Activated T-helper 1 cell treated with anti-CD3 and anti-CD28 coated beads, Interleukin-12 subunit alpha, Interleukin-12 subunit beta, Interleukin-2, Interleukin-4 antibody, amounts not matched to agents 30 ng/mL and 10 ng/mL and 1 ng/mL, durations not matched to agents 14 hours and 24 hours and 36 hours (primary cell): ENCODE measurements at regions of chrX and their contacts with region 1.

Region 1: DNA sequence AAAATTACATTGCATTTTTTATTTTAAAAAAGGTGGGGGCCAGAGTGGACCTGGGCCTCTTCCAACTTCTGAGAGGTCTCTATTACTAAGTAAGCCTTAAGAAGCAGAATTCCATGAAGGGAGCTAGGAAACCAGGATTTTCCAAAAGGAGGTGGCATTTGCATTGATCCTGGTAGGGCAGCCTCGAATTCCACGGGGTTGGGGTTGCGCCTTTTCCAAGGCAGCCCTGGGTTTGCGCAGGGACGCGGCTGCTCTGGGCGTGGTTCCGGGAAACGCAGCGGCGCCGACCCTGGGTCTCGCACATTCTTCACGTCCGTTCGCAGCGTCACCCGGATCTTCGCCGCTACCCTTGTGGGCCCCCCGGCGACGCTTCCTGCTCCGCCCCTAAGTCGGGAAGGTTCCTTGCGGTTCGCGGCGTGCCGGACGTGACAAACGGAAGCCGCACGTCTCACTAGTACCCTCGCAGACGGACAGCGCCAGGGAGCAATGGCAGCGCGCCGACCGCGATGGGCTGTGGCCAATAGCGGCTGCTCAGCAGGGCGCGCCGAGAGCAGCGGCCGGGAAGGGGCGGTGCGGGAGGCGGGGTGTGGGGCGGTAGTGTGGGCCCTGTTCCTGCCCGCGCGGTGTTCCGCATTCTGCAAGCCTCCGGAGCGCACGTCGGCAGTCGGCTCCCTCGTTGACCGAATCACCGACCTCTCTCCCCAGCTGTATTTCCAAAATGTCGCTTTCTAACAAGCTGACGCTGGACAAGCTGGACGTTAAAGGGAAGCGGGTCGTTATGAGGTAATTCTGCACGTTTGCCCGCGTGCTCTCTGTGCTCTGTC is at the start of gene PGK1:
- DNase-seq: peak; percentile 92
- H3K4me3 Mint-ChIP-seq: peak within 1 kb of the TSS; percentile 97
- H3K27ac Mint-ChIP-seq: peak within 1 kb of the TSS; percentile 91
- H3K4me1 Mint-ChIP-seq: peaks cover 51% of the 10 kb centered on the region
- H3K27me3 Mint-ChIP-seq: no peaks in the 10 kb centered on the region
- total RNA-seq, gene PGK1: 799 and 814 TPM in 2 replicates

Region 2: DNA sequence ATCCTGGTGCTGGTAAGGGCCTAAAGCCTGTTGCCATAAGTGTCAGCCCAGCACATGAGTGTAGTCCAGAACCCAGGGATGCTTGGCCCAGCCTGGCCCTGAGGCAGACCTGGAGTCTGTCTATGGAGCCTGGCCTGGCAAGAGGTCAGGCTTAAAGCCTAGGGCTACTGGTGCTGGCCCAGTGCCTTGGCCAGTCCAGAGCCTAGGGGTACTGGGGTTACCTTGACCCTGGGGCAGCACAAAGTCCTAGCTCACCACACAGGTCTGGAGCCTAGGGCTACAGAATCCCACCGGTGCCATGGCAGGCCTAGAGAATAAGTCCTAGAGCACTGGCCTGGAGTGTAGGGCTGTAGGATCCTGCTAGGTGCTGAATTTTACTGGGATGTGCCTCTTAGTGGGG is 1282.6 kb before region 1 on chrX:
- intact Hi-C with region 1: no loop called
- DNase-seq: no peak
- H3K4me3 Mint-ChIP-seq: no peak overlapping the region
- H3K27ac Mint-ChIP-seq: no peak overlapping the region
- H3K4me1 Mint-ChIP-seq: no peaks in the 10 kb centered on the region
- H3K27me3 Mint-ChIP-seq: no peaks in the 10 kb centered on the region

Region 3: GRCh38 chrX:77899081-77899828 is 204.6 kb before region 1 on chrX and contains the start of gene COX7B:
- intact Hi-C with region 1: loop called (anchors 1 kb)
- DNase-seq: peak; percentile 65
- H3K4me3 Mint-ChIP-seq: peak within 1 kb of the TSS; percentile 95
- H3K27ac Mint-ChIP-seq: peak within 1 kb of the TSS; percentile 94
- H3K4me1 Mint-ChIP-seq: peaks cover 14% of the 10 kb centered on the region
- H3K27me3 Mint-ChIP-seq: peaks cover 2% of the 10 kb centered on the region
- total RNA-seq, gene COX7B: 272 and 286 TPM in 2 replicates

Region 4: DNA sequence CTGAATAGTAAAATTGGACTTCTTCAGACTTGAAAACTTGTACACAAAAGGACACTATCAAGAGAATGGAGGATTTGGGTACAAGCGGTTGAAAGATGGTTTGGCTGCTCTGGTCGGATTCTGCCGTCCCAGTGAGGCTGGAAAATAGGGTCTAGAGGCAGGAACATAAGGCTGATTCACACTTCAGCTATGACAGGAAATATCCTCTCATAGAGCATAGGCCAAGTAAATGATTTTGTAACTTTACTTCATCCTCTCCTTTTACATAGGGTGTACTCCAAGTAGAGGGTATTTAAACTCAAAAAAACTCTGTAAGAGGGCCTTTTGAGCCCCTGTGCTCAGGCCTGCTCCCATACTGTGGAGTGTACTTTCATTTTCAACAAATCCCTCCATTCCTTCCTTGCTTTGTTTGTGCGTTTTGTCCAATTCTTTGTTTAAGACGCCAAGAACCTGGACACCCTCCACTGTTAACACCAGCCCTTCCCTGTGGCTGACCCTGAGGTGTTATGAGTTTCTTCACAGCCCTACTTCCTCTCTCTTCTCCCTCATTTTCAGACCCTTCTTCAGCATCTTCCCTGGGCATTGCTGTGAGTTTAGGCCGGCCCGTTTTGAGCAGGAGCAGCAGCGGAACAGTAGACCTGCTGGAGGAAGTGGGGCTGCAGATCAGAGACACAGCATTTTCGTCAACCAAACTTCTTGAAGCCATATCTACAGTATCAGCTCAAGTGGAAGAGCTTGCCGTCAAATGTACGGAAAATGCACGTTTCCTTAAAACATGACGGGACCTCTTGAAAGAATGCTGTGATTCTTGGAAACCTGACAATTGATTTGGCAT is 141.6 kb before region 1 on chrX:
- intact Hi-C with region 1: loop called (anchors 2 kb)
- DNase-seq: peak; percentile 5
- H3K4me3 Mint-ChIP-seq: peak overlapping the region; percentile 80
- H3K27ac Mint-ChIP-seq: peak overlapping the region; percentile 99
- H3K4me1 Mint-ChIP-seq: peaks cover 54% of the 10 kb centered on the region
- H3K27me3 Mint-ChIP-seq: no peaks in the 10 kb centered on the region

Region 5: DNA sequence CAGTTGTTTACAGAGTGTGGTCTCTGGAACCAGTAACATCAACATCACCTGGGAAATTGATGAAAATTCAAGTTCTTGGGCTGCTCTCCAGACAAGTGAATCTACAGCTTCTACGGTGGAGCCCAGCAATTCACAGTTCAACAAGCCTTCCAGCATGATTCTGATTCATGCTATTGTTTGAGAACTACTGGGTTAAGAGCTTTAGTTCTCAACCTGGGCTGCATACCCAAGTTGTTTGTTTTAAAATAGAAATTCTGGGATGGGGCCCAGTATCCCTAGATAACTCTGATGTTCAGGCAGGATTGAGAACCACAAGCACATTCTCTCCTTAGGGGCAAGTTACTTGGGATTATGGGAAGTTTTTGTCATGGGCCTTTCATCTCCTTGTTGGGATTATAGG is 37.7 kb before region 1 on chrX:
- intact Hi-C with region 1: loop called (anchors 1 kb)
- DNase-seq: no peak
- H3K4me3 Mint-ChIP-seq: no peak overlapping the region
- H3K27ac Mint-ChIP-seq: no peak overlapping the region
- H3K4me1 Mint-ChIP-seq: peaks cover 30% of the 10 kb centered on the region
- H3K27me3 Mint-ChIP-seq: no peaks in the 10 kb centered on the region

Region 6: DNA sequence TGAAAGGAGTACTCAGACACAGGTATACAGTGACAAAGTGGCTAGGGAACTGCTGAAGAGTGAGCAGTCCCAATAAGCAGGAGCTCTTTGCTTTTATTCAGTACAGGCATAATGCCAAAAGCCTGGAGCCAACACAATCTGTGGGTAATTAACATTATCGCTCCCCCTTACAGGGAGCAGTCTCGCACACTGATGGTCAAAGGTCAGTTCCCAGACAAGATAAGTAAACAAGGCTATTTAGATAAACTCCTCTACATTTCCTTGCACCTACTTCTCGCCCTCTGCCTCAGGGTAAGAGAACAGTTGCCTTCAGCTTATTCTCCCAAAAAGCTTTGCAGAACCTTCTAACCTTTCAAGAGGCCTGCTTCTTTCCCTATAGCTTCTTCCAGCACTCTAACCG is 109.5 kb after region 1 on chrX:
- intact Hi-C with region 1: no loop called
- DNase-seq: no peak
- H3K4me3 Mint-ChIP-seq: no peak overlapping the region
- H3K27ac Mint-ChIP-seq: no peak overlapping the region
- H3K4me1 Mint-ChIP-seq: no peaks in the 10 kb centered on the region
- H3K27me3 Mint-ChIP-seq: peaks cover 2% of the 10 kb centered on the region

Region 7: GRCh38 chrX:78327370-78328086 is 223.7 kb after region 1 on chrX and contains the start of gene CYSLTR1:
- intact Hi-C with region 1: loop called (anchors 5 kb)
- DNase-seq: no peak
- H3K4me3 Mint-ChIP-seq: peak within 1 kb of the TSS; percentile 90
- H3K27ac Mint-ChIP-seq: peak within 1 kb of the TSS; percentile 82
- H3K4me1 Mint-ChIP-seq: peaks cover 66% of the 10 kb centered on the region
- H3K27me3 Mint-ChIP-seq: no peaks in the 10 kb centered on the region
- total RNA-seq, gene CYSLTR1: 13.9 and 14.2 TPM in 2 replicates